CD4-positive, alpha-beta T cell (primary cell): ENCODE measurements at regions of chr6 and their contacts with region 1.

Region 1: GRCh38 chr6:24910961-24911712 is 24.6 kb downstream of the RIPOR2 start:
- DNase-seq: peak in 13 of 14 experiments; percentile 27 to 79 (median 58)
- ATAC-seq: peak; percentile 46
- H3K4me3 ChIP-seq: peak overlapping the region; percentile 65
- H3K4me3 Mint-ChIP-seq: peak overlapping the region; percentile 95
- H3K27ac ChIP-seq: peak overlapping the region; percentile 73 to 88
- H3K27ac Mint-ChIP-seq: peak overlapping the region; percentile 97
- H3K4me1 ChIP-seq: peaks cover 93% of the 10 kb centered on the region
- H3K4me1 Mint-ChIP-seq: peaks cover 99% of the 10 kb centered on the region
- H3K27me3 ChIP-seq: no peaks in the 10 kb centered on the region
- H3K27me3 Mint-ChIP-seq: no peaks in the 10 kb centered on the region
- CTCF ChIP-seq: no peak

Region 2: GRCh38 chr6:24855395-24856245 is 55.5 kb before region 1 on chr6:
- CTCF ChIA-PET with region 1: interaction called, 28 read pairs
- POLR2A ChIA-PET with region 1: interaction called, 19 read pairs
- intact Hi-C with region 1: loop called (anchors 1 to 5 kb)
- DNase-seq: peak; percentile 49 to 90 (median 61)
- ATAC-seq: peak; percentile 66
- H3K4me3 ChIP-seq: no peak overlapping the region
- H3K4me3 Mint-ChIP-seq: peak overlapping the region; percentile 17
- H3K27ac ChIP-seq: peak overlapping the region; percentile 35 to 61
- H3K27ac Mint-ChIP-seq: peak overlapping the region; percentile 93
- H3K4me1 ChIP-seq: peaks cover 51% of the 10 kb centered on the region
- H3K4me1 Mint-ChIP-seq: peaks cover 67% of the 10 kb centered on the region
- H3K27me3 ChIP-seq: no peaks in the 10 kb centered on the region
- H3K27me3 Mint-ChIP-seq: no peaks in the 10 kb centered on the region
- CTCF ChIP-seq: peak; percentile 79

Region 3: GRCh38 chr6:24861934-24862333 is 49.2 kb before region 1 on chr6:
- CTCF ChIA-PET with region 1: interaction called, 28 read pairs
- POLR2A ChIA-PET with region 1: interaction called, 19 read pairs
- intact Hi-C with region 1: loop called in 1 of 2 experiments (anchors 5 kb)
- DNase-seq: no peak
- ATAC-seq: no peak
- H3K4me3 ChIP-seq: no peak overlapping the region
- H3K4me3 Mint-ChIP-seq: no peak overlapping the region
- H3K27ac ChIP-seq: peak overlapping the region; percentile 39 to 78
- H3K27ac Mint-ChIP-seq: peak overlapping the region; percentile 93
- H3K4me1 ChIP-seq: peaks cover 77% of the 10 kb centered on the region
- H3K4me1 Mint-ChIP-seq: peaks cover 98% of the 10 kb centered on the region
- H3K27me3 ChIP-seq: no peaks in the 10 kb centered on the region
- H3K27me3 Mint-ChIP-seq: no peaks in the 10 kb centered on the region
- CTCF ChIP-seq: no peak

Region 4: GRCh38 chr6:24883618-24884017 is 27.5 kb before region 1 on chr6:
- CTCF ChIA-PET with region 1: interaction called, 11 read pairs
- POLR2A ChIA-PET with region 1: interaction called, 6 read pairs
- intact Hi-C with region 1: no loop called
- DNase-seq: peak in 2 of 14 experiments; percentile 23 to 41
- ATAC-seq: peak; percentile 47
- H3K4me3 ChIP-seq: no peak overlapping the region
- H3K4me3 Mint-ChIP-seq: peak overlapping the region; percentile 81
- H3K27ac ChIP-seq: peak overlapping the region in 1 of 2 donors; percentile 47
- H3K27ac Mint-ChIP-seq: peak overlapping the region; percentile 97
- H3K4me1 ChIP-seq: peaks cover 54% of the 10 kb centered on the region
- H3K4me1 Mint-ChIP-seq: peaks cover 94% of the 10 kb centered on the region
- H3K27me3 ChIP-seq: no peaks in the 10 kb centered on the region
- H3K27me3 Mint-ChIP-seq: no peaks in the 10 kb centered on the region
- CTCF ChIP-seq: no peak

Region 5: DNA sequence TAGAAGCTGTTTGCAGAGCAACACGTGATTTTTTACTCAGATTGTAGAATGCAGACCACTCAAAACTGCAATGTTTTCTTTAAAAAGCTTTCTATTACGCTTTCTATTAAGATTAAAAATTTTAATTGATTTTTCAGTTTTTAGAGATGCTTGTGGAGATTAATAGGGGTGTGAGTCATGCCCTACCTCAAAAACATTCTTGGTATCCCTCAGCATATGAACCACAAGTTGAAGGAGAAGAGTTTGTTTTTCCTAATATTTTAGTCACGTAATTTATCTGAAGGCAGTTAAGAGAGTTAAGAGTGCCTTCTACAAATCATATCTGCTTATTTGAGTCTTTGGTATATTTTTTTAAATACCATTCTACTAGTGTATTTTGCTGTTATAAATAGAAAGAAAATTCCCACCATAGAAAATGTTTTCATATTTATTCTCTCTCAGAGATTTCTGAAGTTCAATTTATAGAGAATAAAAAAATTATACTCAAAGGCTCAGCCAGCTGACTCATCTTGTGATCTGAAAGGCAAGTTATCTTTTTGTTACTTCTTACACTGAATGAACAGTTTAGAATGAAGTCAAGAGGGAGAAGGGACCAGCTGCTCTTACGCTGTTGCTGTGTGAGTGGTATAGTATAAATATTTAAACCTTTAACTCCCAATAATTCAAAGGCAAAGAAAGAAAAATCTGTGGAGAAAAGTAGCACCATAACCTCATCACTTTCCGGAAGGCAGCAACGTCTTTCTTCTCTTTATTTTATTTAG is 17.0 kb after region 1 on chr6:
- CTCF ChIA-PET with region 1: interaction called, 65 read pairs
- POLR2A ChIA-PET with region 1: interaction called, 172 read pairs
- intact Hi-C with region 1: loop called in 1 of 2 experiments (anchors 2 kb)
- DNase-seq: peak in 1 of 14 experiments; percentile 50
- ATAC-seq: peak; percentile 24
- H3K4me3 ChIP-seq: peak overlapping the region; percentile 89
- H3K4me3 Mint-ChIP-seq: peak overlapping the region; percentile 97
- H3K27ac ChIP-seq: peak overlapping the region; percentile 55 to 89
- H3K27ac Mint-ChIP-seq: peak overlapping the region; percentile 97
- H3K4me1 ChIP-seq: peaks cover 49% of the 10 kb centered on the region
- H3K4me1 Mint-ChIP-seq: peaks cover 81% of the 10 kb centered on the region
- H3K27me3 ChIP-seq: no peaks in the 10 kb centered on the region
- H3K27me3 Mint-ChIP-seq: no peaks in the 10 kb centered on the region
- CTCF ChIP-seq: no peak